CD4-positive, alpha-beta T cell (primary cell): ENCODE measurements at regions of chr22 and their contacts with region 1.

Region 1: DNA sequence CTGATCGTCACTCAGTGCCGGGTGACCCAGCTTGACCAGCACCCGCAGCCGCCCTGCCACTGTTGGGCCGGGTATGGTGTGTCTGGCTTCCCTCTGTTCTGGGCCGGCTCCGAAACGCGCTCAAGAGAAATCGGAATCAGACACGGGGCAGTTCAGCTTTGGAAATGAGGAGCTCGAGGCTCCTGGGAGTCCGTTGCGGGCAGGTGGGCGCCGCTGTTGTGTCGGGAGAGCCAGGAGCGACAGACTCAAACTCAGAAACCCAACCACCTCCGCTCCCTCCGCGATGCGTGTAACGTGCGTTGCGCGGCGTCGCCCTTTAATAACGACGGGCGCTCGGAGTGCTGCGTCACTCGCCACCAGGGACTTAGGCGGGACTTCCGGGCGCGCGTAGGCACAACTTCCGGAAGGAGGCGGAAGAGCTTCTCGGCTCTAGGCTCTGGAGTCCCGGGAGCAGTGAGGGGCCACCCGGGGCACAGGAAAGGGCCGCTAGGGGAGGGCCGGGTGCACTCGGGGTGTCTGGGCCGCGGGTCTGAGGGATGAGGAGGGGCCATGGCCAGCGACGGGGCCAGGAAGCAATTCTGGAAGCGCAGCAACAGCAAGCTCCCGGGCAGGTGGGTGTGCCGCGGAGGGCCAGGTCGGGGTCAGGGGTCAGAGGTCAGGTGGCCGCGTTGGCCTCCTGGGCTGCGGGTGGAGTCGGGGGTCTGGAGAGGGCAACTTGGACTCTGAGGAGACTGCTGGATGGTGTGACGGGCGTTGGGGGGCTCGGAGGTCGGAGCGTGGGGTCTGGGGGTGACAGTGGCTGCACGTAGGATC is at the start of gene TBC1D22A:
- DNase-seq: peak; percentile 91 to 97 (median 93)
- ATAC-seq: peak; percentile 86
- H3K4me3 ChIP-seq: peak within 1 kb of the TSS; percentile 77
- H3K4me3 Mint-ChIP-seq: peak within 1 kb of the TSS; percentile 99
- H3K27ac ChIP-seq: peak within 1 kb of the TSS; percentile 92
- H3K27ac Mint-ChIP-seq: peak within 1 kb of the TSS; percentile 100
- H3K4me1 ChIP-seq: peaks cover 57% of the 10 kb centered on the region
- H3K4me1 Mint-ChIP-seq: peaks cover 64% of the 10 kb centered on the region
- H3K27me3 ChIP-seq: no peaks in the 10 kb centered on the region
- H3K27me3 Mint-ChIP-seq: no peaks in the 10 kb centered on the region
- CTCF ChIP-seq: no peak
- total RNA-seq, gene TBC1D22A: 27.1 to 31.7 TPM

Region 2: GRCh38 chr22:46663436-46664100 is 98.9 kb before region 1 on chr22:
- CTCF ChIA-PET with region 1: no interaction called
- POLR2A ChIA-PET with region 1: no interaction called
- intact Hi-C with region 1: no loop called
- DNase-seq: no peak
- ATAC-seq: no peak
- H3K4me3 ChIP-seq: no peak overlapping the region
- H3K4me3 Mint-ChIP-seq: no peak overlapping the region
- H3K27ac ChIP-seq: no peak overlapping the region
- H3K27ac Mint-ChIP-seq: no peak overlapping the region
- H3K4me1 ChIP-seq: peaks cover 29% of the 10 kb centered on the region
- H3K4me1 Mint-ChIP-seq: peaks cover 28% of the 10 kb centered on the region
- H3K27me3 ChIP-seq: no peaks in the 10 kb centered on the region
- H3K27me3 Mint-ChIP-seq: no peaks in the 10 kb centered on the region
- CTCF ChIP-seq: no peak

Region 3: DNA sequence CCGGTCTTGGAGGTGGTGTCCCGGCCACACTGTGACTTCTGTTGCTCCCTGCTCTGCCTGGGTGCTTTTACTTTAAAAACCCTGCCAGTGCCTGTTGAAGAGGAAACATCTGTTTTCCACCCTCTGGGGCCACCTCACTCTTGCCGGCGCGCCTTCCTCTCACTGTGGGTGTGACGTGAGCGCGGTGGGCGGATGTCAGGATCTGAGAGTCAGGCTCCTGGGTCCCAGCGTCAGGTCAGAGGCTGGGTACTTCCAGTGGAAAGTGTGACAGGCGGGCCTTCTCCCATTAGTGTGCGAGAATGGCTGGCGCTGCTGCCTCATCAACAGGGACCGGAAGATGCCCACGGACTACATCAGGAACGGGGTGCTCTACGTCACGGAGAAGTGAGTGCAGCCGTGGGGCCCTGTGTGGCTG is 88.1 kb before region 1 on chr22:
- CTCF ChIA-PET with region 1: no interaction called
- POLR2A ChIA-PET with region 1: no interaction called
- intact Hi-C with region 1: loop called in 1 of 2 experiments (anchors 1 kb)
- DNase-seq: peak; percentile 64 to 95 (median 86)
- ATAC-seq: peak; percentile 88
- H3K4me3 ChIP-seq: peak overlapping the region; percentile 60
- H3K4me3 Mint-ChIP-seq: peak overlapping the region; percentile 86
- H3K27ac ChIP-seq: peak overlapping the region; percentile 34 to 57
- H3K27ac Mint-ChIP-seq: peak overlapping the region; percentile 98
- H3K4me1 ChIP-seq: peaks cover 54% of the 10 kb centered on the region
- H3K4me1 Mint-ChIP-seq: peaks cover 21% of the 10 kb centered on the region
- H3K27me3 ChIP-seq: no peaks in the 10 kb centered on the region
- H3K27me3 Mint-ChIP-seq: no peaks in the 10 kb centered on the region
- CTCF ChIP-seq: no peak

Region 4: DNA sequence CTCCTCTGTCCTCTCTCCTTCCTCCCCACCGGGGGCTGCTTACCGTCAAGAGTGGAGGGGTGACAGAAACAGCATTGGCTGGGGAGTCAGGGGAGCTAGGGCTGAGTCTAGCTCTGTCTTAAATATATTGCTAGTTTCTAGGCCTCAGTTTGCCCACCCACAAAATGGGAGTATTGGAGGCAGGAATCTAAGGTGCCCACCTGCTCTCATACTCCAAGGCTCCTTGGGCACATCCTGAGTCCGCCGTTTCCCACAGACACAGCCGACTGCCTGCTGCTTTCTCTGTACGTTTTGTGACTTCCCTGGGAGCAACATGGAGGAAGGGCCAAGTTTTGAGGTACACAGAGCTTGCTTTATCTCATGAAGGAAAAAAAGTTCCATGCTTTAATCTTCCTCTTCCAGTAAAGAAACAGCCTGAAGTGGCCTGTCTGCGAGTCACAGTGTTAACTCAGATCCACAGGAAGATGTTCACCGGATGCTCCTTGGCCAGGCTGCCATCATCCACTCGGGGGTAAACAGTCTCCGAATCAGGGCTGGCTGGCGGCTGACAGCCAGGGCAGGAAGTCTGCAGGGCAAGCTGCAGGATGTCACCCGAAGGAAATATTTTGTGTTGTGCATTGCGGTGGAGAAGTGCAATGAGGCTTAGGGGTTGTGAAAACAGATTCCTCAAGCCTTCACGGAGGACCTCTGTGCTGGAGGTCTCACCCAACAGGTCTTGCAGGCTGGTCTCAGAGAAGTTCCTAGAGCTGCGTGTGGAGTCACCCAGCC is 13.4 kb before region 1 on chr22:
- CTCF ChIA-PET with region 1: interaction called, 17 read pairs
- POLR2A ChIA-PET with region 1: interaction called, 59 read pairs
- intact Hi-C with region 1: loop called in 1 of 2 experiments (anchors 2 kb)
- DNase-seq: peak; percentile 63 to 86 (median 80)
- ATAC-seq: peak; percentile 97
- H3K4me3 ChIP-seq: peak overlapping the region; percentile 51
- H3K4me3 Mint-ChIP-seq: peak overlapping the region; percentile 73
- H3K27ac ChIP-seq: peak overlapping the region; percentile 78 to 91
- H3K27ac Mint-ChIP-seq: peak overlapping the region; percentile 96
- H3K4me1 ChIP-seq: peaks cover 50% of the 10 kb centered on the region
- H3K4me1 Mint-ChIP-seq: peaks cover 34% of the 10 kb centered on the region
- H3K27me3 ChIP-seq: no peaks in the 10 kb centered on the region
- H3K27me3 Mint-ChIP-seq: no peaks in the 10 kb centered on the region
- CTCF ChIP-seq: no peak

Region 5: GRCh38 chr22:46791201-46791731 is 28.8 kb after region 1 on chr22:
- CTCF ChIA-PET with region 1: interaction called, 19 read pairs
- POLR2A ChIA-PET with region 1: interaction called, 60 read pairs
- intact Hi-C with region 1: loop called (anchors 1 to 2 kb)
- DNase-seq: peak; percentile 67 to 95 (median 82)
- ATAC-seq: peak; percentile 90
- H3K4me3 ChIP-seq: peak overlapping the region; percentile 36
- H3K4me3 Mint-ChIP-seq: peak overlapping the region; percentile 79
- H3K27ac ChIP-seq: peak overlapping the region; percentile 91 to 97
- H3K27ac Mint-ChIP-seq: peak overlapping the region; percentile 100
- H3K4me1 ChIP-seq: peaks cover 55% of the 10 kb centered on the region
- H3K4me1 Mint-ChIP-seq: peaks cover 51% of the 10 kb centered on the region
- H3K27me3 ChIP-seq: no peaks in the 10 kb centered on the region
- H3K27me3 Mint-ChIP-seq: no peaks in the 10 kb centered on the region
- CTCF ChIP-seq: no peak

Region 6: DNA sequence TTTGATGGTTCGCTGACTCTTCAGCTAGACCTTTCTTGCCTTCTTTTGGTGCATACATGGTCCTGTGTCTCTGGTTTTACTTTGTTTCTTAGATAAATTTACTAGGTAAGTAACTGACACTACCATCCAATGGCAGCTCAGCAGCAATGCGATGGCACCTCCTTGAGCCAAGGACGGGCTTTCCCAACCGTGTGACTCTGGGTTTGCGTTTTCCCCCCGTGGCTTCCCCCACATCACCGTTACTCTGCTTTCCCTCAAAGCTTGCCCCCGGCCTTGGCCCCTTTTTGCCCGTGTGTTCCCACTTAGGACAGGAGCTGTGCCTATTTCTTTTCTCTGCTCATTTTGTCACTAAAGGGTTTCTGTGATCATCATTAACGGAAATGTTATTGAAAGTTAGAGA is 41.5 kb after region 1 on chr22:
- CTCF ChIA-PET with region 1: interaction called, 130 read pairs
- POLR2A ChIA-PET with region 1: interaction called, 28 read pairs
- intact Hi-C with region 1: loop called (anchors 1 kb)
- DNase-seq: peak in 1 of 14 experiments; percentile 8
- ATAC-seq: no peak
- H3K4me3 ChIP-seq: no peak overlapping the region
- H3K4me3 Mint-ChIP-seq: no peak overlapping the region
- H3K27ac ChIP-seq: no peak overlapping the region
- H3K27ac Mint-ChIP-seq: no peak overlapping the region
- H3K4me1 ChIP-seq: peaks cover 25% of the 10 kb centered on the region
- H3K4me1 Mint-ChIP-seq: peaks cover 62% of the 10 kb centered on the region
- H3K27me3 ChIP-seq: no peaks in the 10 kb centered on the region
- H3K27me3 Mint-ChIP-seq: no peaks in the 10 kb centered on the region
- CTCF ChIP-seq: no peak

Region 7: GRCh38 chr22:47618180-47619010 is 856.0 kb after region 1 on chr22:
- CTCF ChIA-PET with region 1: no interaction called
- POLR2A ChIA-PET with region 1: no interaction called
- intact Hi-C with region 1: no loop called
- DNase-seq: no peak
- ATAC-seq: no peak
- H3K4me3 ChIP-seq: no peak overlapping the region
- H3K4me3 Mint-ChIP-seq: no peak overlapping the region
- H3K27ac ChIP-seq: no peak overlapping the region
- H3K27ac Mint-ChIP-seq: no peak overlapping the region
- H3K4me1 ChIP-seq: no peaks in the 10 kb centered on the region
- H3K4me1 Mint-ChIP-seq: no peaks in the 10 kb centered on the region
- H3K27me3 ChIP-seq: peaks cover 0 to 2% of the 10 kb centered on the region in 2 experiments
- H3K27me3 Mint-ChIP-seq: peaks cover 23% of the 10 kb centered on the region
- CTCF ChIP-seq: no peak